H1 (cell line): ENCODE measurements at regions of chr6 and their contacts with region 1.

Region 1: GRCh38 chr6:52284460-52285176 is at the start of gene MCM3:
- DNase-seq: peak; percentile 91 to 98
- H3K4me3 ChIP-seq: peak within 1 kb of the TSS; percentile 94 to 98 (median 96)
- H3K27ac ChIP-seq: peak within 1 kb of the TSS; percentile 96
- H3K4me1 ChIP-seq: peaks cover 0 to 5% (median 2%) of the 10 kb centered on the region in 4 experiments; a peak in 4 of 7 replicates
- H3K27me3 ChIP-seq: no peaks in the 10 kb centered on the region
- CTCF ChIP-seq: no peak
- EP300 ChIP-seq: no peak
- POLR2A ChIP-seq: peak; percentile 89 to 98
- RAD21 ChIP-seq: no peak
- total RNA-seq, gene MCM3: 293 TPM in 2 replicates

Region 2: DNA sequence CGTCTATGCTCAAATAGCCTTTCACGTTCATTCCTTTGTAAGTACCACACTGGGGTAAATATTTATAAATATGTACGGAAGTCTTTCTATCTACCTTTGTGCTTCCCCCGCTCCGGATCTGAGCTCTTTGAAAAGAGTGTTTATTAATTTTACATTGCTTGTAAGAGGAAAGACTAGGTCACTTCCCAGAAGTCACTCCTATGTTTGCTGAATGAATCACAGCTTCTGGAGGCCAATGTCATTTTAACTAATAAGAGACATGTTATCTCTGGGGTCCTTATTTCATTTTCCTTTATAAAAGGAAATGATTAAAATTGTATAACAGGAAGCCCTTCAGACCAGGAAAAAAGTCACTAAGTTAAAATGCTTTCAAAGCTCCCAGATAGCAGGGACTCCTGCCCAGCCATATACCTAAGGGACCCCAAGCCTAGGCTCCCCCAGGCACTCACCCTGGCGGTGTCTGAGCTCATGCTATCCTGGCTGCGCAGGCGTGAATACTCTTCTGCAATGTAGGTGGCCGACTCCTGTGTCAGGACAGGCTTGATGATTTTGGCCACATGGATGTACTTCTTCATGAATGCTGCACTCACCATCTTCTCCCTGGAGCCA is 12.7 kb before region 1 on chr6:
- CTCF ChIA-PET with region 1: interaction called, 5 read pairs
- POLR2A ChIA-PET with region 1: interaction called, 87 read pairs
- DNase-seq: no peak
- H3K4me3 ChIP-seq: no peak overlapping the region
- H3K27ac ChIP-seq: no peak overlapping the region
- H3K4me1 ChIP-seq: no peaks in the 10 kb centered on the region
- H3K27me3 ChIP-seq: no peaks in the 10 kb centered on the region
- CTCF ChIP-seq: no peak
- EP300 ChIP-seq: no peak
- POLR2A ChIP-seq: no peak
- RAD21 ChIP-seq: no peak

Region 3: DNA sequence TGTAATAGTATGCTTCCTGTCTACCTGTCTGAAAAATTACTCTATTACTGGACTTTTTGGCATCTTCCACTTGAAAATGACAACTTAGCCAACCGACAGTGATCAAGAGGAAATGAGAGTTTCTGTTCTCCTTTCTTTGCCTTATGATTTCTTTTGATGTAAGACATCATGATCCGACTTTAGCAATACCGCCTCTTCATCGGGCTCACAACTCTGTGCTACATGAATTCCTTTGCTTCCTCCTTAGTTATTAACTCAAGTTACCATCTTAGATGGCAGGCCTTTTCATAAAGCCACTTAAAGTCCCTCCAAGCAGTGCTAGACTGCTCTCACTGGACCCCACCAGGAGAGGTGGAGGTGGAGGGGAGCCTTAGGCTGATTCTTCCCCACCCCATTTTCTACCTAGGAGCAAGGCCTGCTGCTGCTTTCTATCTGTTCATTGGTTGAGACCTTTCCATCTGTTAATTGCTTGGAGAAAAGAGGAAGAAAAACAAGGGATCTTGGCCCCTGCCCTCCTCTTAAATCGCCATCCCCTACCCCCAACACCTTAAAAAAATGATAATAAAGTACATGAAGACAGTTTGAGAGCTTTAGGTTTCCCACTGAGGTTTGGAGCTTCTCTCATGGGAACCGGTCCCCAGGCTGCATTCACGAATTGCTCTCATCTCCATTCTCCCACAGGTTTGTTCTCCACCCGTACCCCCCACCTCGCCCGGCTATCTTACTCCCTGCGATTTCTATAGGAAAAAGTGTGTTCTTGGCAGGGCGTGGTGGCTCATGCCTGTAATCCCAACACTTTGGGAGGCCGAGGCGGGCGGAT is 21.5 kb after region 1 on chr6:
- CTCF ChIA-PET with region 1: interaction called, 13 read pairs
- POLR2A ChIA-PET with region 1: interaction called, 7 read pairs
- DNase-seq: no peak
- H3K4me3 ChIP-seq: no peak overlapping the region
- H3K27ac ChIP-seq: no peak overlapping the region
- H3K4me1 ChIP-seq: no peaks in the 10 kb centered on the region; a peak in 2 of 7 replicates
- H3K27me3 ChIP-seq: no peaks in the 10 kb centered on the region
- CTCF ChIP-seq: no peak
- EP300 ChIP-seq: no peak
- POLR2A ChIP-seq: no peak
- RAD21 ChIP-seq: no peak

Region 4: DNA sequence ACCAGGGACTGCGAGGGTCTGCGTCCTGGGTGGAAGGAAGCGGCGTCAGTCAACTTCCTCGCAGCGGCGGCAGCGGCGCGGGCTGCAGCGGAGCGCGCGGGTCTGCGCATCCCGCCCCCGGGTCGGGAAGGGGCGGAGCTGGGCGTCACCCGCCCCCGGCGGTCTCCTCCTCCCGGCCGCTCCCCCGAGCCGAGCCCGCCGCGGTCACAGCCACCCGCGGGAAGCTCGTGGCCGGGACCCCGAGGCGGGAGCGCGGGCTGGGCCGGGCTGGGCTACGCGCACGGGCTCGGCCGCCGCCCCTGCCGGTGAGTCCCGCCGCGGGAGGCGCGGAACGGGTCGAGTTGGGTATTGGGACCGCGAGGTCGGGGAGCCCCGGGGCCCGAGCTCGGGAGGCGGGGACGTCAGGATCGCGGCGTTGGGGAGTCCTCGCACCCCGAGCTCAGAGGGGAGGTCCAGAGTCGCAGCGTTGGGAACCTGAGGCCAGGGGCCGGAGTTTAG is 77.4 kb after region 1 on chr6 and contains the start of gene PAQR8:
- CTCF ChIA-PET with region 1: interaction called, 8 read pairs
- POLR2A ChIA-PET with region 1: interaction called, 11 read pairs
- DNase-seq: peak in 1 of 2 experiments; percentile 79
- H3K4me3 ChIP-seq: peak within 1 kb of the TSS; percentile 85 to 98 (median 86)
- H3K27ac ChIP-seq: 0 out of 2 replicates have a peak within 1 kb of the TSS, but pooled peaks have one; percentile 16
- H3K4me1 ChIP-seq: peaks cover 2 to 12% (median 10%) of the 10 kb centered on the region in 4 experiments
- H3K27me3 ChIP-seq: peaks cover 0 to 11% (median 2%) of the 10 kb centered on the region in 4 experiments; a peak in 5 of 7 replicates
- CTCF ChIP-seq: no peak
- EP300 ChIP-seq: no peak
- POLR2A ChIP-seq: no peak
- RAD21 ChIP-seq: no peak
- total RNA-seq, gene PAQR8: 9.1 and 9.6 TPM in 2 replicates

Region 5: GRCh38 chr6:52399511-52400312 is 115.1 kb after region 1 on chr6:
- CTCF ChIA-PET with region 1: interaction called, 175 read pairs
- POLR2A ChIA-PET with region 1: interaction called, 75 read pairs
- DNase-seq: no peak
- H3K4me3 ChIP-seq: no peak overlapping the region
- H3K27ac ChIP-seq: no peak overlapping the region
- H3K4me1 ChIP-seq: peaks cover 0 to 4% (median 3%) of the 10 kb centered on the region in 4 experiments; a peak in 3 of 7 replicates
- H3K27me3 ChIP-seq: no peaks in the 10 kb centered on the region
- CTCF ChIP-seq: peak; percentile 35 to 87 (median 82)
- EP300 ChIP-seq: no peak
- POLR2A ChIP-seq: no peak
- RAD21 ChIP-seq: peak; percentile 89 to 91

Region 6: GRCh38 chr6:52419809-52420670 is 135.4 kb after region 1 on chr6 and contains the start of gene EFHC1:
- CTCF ChIA-PET with region 1: interaction called, 9 read pairs
- POLR2A ChIA-PET with region 1: interaction called, 16 read pairs
- DNase-seq: peak; percentile 96 to 99
- H3K4me3 ChIP-seq: peak within 1 kb of the TSS; percentile 77 to 90 (median 88)
- H3K27ac ChIP-seq: peak within 1 kb of the TSS; percentile 78
- H3K4me1 ChIP-seq: peaks cover 0 to 4% (median 0%) of the 10 kb centered on the region in 4 experiments; a peak in 1 of 7 replicates
- H3K27me3 ChIP-seq: no peaks in the 10 kb centered on the region
- CTCF ChIP-seq: no peak
- EP300 ChIP-seq: no peak
- POLR2A ChIP-seq: peak; percentile 73 to 92
- RAD21 ChIP-seq: no peak
- total RNA-seq, gene EFHC1: 14.7 and 16.4 TPM in 2 replicates